PC-3 (cell line): ENCODE measurements at regions of chr14 and their contacts with region 1.

Region 1: GRCh38 chr14:100645192-100645990 is 58.2 kb upstream of the BEGAIN start:
- DNase-seq: peak; percentile 90
- ATAC-seq: peak; percentile 88
- H3K4me3 ChIP-seq: no peak overlapping the region
- H3K27ac ChIP-seq: no peak overlapping the region
- H3K4me1 ChIP-seq: peaks cover 16% of the 10 kb centered on the region
- H3K27me3 ChIP-seq: no peaks in the 10 kb centered on the region
- CTCF ChIP-seq: peak; percentile 87

Region 2: GRCh38 chr14:100547633-100548294 is 97.6 kb before region 1 on chr14:
- CTCF ChIA-PET with region 1: no interaction called
- POLR2A ChIA-PET with region 1: no interaction called
- intact Hi-C with region 1: loop called (anchors 10 kb)
- DNase-seq: peak; percentile 97
- ATAC-seq: peak; percentile 88
- H3K4me3 ChIP-seq: no peak overlapping the region
- H3K27ac ChIP-seq: peak overlapping the region; percentile 53
- H3K4me1 ChIP-seq: peaks cover 25% of the 10 kb centered on the region
- H3K27me3 ChIP-seq: no peaks in the 10 kb centered on the region
- CTCF ChIP-seq: no peak

Region 3: GRCh38 chr14:100775831-100776591 is 130.6 kb after region 1 on chr14:
- CTCF ChIA-PET with region 1: no interaction called
- POLR2A ChIA-PET with region 1: no interaction called
- intact Hi-C with region 1: no loop called
- DNase-seq: no peak
- ATAC-seq: no peak; the same call in 1 of the 2 replicates
- H3K4me3 ChIP-seq: no peak overlapping the region
- H3K27ac ChIP-seq: no peak overlapping the region
- H3K4me1 ChIP-seq: no peaks in the 10 kb centered on the region
- H3K27me3 ChIP-seq: peaks cover 32% of the 10 kb centered on the region
- CTCF ChIP-seq: no peak